ENCODE measurements at regions of chr10 and their contacts with region 1.

Region 1: GRCh38 chr10:63521416-63522276 is 445 bp downstream of the REEP3 start:
- DNase-seq: peak; percentile 42
- H3K4me3 Mint-ChIP-seq: peak overlapping the region; percentile 79
- H3K27ac Mint-ChIP-seq: peak overlapping the region; percentile 81
- H3K4me1 Mint-ChIP-seq: peaks cover 51% of the 10 kb centered on the region
- H3K27me3 Mint-ChIP-seq: no peaks in the 10 kb centered on the region

Region 2: GRCh38 chr10:63465293-63466143 is 56.1 kb before region 1 on chr10 and contains the start of gene JMJD1C:
- intact Hi-C with region 1: loop called (anchors 2 kb)
- DNase-seq: peak; percentile 47
- H3K4me3 Mint-ChIP-seq: peak within 1 kb of the TSS; percentile 91
- H3K27ac Mint-ChIP-seq: peak within 1 kb of the TSS; percentile 58
- H3K4me1 Mint-ChIP-seq: peaks cover 12% of the 10 kb centered on the region
- H3K27me3 Mint-ChIP-seq: peaks cover 32% of the 10 kb centered on the region
- total RNA-seq, gene JMJD1C: 33.8 and 35.2 TPM in 2 replicates

Region 3: GRCh38 chr10:63603709-63604445 is 82.2 kb after region 1 on chr10:
- intact Hi-C with region 1: no loop called
- DNase-seq: no peak
- H3K4me3 Mint-ChIP-seq: no peak overlapping the region
- H3K27ac Mint-ChIP-seq: no peak overlapping the region
- H3K4me1 Mint-ChIP-seq: peaks cover 3% of the 10 kb centered on the region
- H3K27me3 Mint-ChIP-seq: no peaks in the 10 kb centered on the region

Region 4: DNA sequence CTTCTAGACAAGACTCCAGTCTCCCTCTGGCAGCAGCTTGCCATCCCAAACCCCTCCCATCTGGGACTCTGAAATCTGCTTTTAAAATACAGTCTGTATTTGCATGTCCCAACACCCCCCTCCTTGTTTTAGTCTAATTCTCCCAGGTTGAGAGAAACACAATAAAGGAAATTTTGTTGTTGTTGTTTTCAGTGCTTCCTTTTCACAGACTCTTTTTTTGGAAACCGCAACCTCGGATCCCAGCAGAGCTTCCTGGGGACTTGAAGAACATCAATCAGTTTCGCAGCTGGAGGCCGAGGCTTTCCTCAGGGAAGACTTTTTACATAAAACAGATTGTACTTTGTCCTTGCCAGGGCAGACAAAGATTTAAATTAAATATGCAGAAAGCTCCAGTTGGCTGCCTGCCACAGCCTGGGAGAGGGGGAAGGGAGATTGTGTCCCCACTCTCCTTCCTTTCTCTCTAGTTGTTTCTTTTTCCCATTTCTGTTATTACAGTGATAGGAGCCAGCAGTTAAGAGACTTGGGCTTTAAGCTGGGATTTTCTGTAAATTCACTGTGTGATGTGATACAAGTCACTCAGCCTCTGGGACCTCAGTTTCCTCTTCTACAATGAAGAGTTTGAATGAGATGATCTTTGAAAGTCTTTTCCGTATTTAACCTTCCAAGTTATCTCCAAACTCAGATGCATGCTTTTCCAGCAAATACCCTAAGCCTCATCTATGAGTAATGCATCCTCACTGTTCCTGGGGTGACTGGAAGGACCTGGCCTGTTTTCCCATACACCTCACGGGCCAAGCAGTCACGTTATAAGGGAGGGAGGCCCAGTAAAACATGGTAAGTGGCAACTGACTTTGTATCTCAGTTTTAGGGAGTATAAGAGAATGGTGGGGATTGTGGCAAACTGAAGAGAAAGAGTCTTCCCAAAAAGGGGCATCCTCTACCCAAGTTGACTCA is 191.8 kb after region 1 on chr10:
- intact Hi-C with region 1: no loop called
- DNase-seq: no peak
- H3K4me3 Mint-ChIP-seq: no peak overlapping the region
- H3K27ac Mint-ChIP-seq: no peak overlapping the region
- H3K4me1 Mint-ChIP-seq: peaks cover 14% of the 10 kb centered on the region
- H3K27me3 Mint-ChIP-seq: peaks cover 13% of the 10 kb centered on the region